Prostate gland (tissue), 2 donors: ENCODE measurements at regions of chr16 and their contacts with region 1.

Region 1: DNA sequence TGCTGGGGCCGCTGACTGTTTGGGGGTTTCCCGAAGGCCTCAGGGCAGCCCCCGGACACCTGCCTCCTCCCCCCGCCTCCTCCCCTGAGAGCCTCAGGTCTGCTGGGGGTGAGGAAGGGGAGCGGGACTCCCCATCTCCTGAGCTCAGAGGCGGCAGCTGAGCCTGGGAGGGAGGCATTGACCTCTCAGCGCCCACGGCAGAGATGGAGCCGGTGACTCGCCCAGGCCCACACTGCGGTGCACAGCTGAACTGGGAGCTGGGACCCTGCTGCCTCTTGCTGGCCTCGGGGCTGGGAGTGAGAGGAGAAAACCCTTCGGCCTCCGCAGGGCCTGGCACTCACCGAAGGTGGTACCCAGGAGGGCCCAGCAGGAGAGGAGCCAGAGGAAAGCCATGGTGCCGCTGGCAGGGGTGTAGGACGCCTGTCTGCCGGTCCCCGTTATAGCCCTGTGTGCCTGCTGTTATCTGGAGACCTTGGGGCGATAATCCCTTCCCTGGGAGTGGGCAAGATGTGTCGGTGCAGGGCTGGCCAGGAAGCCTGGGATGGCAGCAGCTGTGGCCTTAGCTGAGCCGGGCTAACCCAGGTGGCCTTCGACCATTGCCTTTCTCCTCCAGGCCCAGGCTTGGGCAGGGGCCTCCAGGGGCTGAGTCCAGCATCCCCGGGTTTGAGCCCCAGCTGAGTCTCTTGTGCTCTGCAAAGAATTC is at the start of gene CTRB2:
- DNase-seq: no peak
- H3K4me3 ChIP-seq: no peak within 1 kb of the TSS
- H3K27ac ChIP-seq: no peak within 1 kb of the TSS
- H3K4me1 ChIP-seq: no peaks in the 10 kb centered on the region
- H3K27me3 ChIP-seq: no peaks in the 10 kb centered on the region
- CTCF ChIP-seq: no peak
- POLR2A ChIP-seq: no peak
- total RNA-seq, gene CTRB2: not detected

Region 2: GRCh38 chr16:75224306-75225091 is 17.6 kb after region 1 on chr16:
- intact Hi-C with region 1: loop called (anchors 2 kb)
- DNase-seq: no peak
- H3K4me3 ChIP-seq: no peak overlapping the region
- H3K27ac ChIP-seq: no peak overlapping the region
- H3K4me1 ChIP-seq: no peaks in the 10 kb centered on the region
- H3K27me3 ChIP-seq: no peaks in the 10 kb centered on the region
- CTCF ChIP-seq: no peak
- POLR2A ChIP-seq: no peak

Region 3: DNA sequence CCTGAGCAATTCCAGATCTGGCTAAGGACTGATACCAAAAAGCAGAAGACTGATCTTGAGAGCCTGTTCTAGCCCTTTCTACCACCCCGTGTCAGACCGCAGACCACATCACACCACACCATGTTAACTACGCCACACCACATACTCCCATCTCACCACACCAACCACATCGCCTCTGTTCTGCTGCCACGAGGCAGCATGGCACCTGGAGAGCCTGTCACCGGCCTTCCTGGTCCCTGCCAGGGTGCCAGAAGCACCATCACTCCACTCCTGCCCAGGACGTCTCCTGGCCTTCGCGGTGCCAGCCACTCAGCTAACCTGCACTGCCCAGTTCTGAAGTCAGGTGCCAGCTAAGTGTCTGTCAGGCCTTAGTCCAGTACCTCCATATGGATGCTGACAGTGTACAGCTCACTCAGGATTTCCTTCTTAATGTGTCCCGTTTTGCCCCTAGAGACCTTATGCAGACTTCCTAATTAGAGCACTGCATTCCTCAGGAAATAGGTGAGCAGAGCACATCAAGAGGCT is 81.8 kb after region 1 on chr16:
- intact Hi-C with region 1: no loop called
- DNase-seq: no peak
- H3K4me3 ChIP-seq: no peak overlapping the region
- H3K27ac ChIP-seq: no peak overlapping the region
- H3K4me1 ChIP-seq: no peaks in the 10 kb centered on the region
- H3K27me3 ChIP-seq: no peaks in the 10 kb centered on the region
- CTCF ChIP-seq: no peak
- POLR2A ChIP-seq: no peak